MCF 10A (cell line): ENCODE measurements at regions of chr5 and their contacts with region 1.

Region 1: GRCh38 chr5:138575194-138576015 is at the start of gene HSPA9:
- DNase-seq: peak; percentile 100
- H3K4me3 Mint-ChIP-seq: peak within 1 kb of the TSS; percentile 95
- H3K27ac Mint-ChIP-seq: peak within 1 kb of the TSS; percentile 100
- H3K4me1 Mint-ChIP-seq: peaks cover 23% of the 10 kb centered on the region
- H3K27me3 Mint-ChIP-seq: no peaks in the 10 kb centered on the region
- CTCF ChIP-seq: no peak
- total RNA-seq, gene HSPA9: 1,057 and 1,102 TPM in 2 replicates

Region 2: DNA sequence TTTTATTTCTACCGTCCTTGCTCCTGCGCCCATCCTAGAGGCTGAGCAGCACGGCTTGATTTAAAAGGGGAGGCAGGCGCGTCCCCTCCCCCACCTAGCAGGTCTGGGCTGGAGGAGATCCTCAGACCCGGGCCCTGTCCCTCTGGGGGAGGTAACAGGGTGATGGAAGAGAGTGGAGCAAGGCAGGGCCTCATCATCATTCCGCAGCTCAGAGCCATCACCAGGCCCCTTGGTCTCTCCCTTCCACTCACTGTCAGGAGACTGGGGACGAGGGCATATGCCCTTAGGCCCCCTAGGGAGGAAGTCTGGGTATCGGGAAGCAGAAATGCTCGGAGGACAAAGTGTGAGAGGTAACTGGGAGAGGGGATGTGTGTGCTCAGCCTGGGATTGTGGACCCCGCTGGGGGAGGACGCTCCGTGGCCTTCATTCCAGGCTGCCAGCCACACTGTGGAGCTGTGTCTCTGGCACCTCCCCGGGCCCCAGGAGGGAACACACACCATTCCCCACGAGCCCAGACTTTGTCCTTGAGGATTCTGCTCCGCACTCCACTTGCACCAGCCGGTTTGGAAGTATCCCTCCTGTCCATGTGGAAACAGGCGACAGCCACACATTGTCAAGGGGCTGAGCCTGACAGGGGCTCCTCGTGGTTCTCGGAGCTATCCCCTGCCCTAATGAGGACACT is 135.8 kb before region 1 on chr5:
- CTCF ChIA-PET with region 1: no interaction called
- POLR2A ChIA-PET with region 1: no interaction called
- intact Hi-C with region 1: no loop called
- DNase-seq: no peak
- H3K4me3 Mint-ChIP-seq: peak overlapping the region; percentile 69
- H3K27ac Mint-ChIP-seq: peak overlapping the region; percentile 85
- H3K4me1 Mint-ChIP-seq: peaks cover 19% of the 10 kb centered on the region
- H3K27me3 Mint-ChIP-seq: no peaks in the 10 kb centered on the region
- CTCF ChIP-seq: no peak

Region 3: GRCh38 chr5:138542956-138543729 is 32.3 kb before region 1 on chr5 and contains the start of gene ETF1:
- CTCF ChIA-PET with region 1: interaction called, 8 read pairs
- POLR2A ChIA-PET with region 1: interaction called, 97 read pairs
- intact Hi-C with region 1: loop called (anchors 2 kb)
- DNase-seq: peak; percentile 100
- H3K4me3 Mint-ChIP-seq: peak within 1 kb of the TSS; percentile 79
- H3K27ac Mint-ChIP-seq: peak within 1 kb of the TSS; percentile 97
- H3K4me1 Mint-ChIP-seq: peaks cover 32% of the 10 kb centered on the region
- H3K27me3 Mint-ChIP-seq: no peaks in the 10 kb centered on the region
- CTCF ChIP-seq: no peak
- total RNA-seq, gene ETF1: 307 and 349 TPM in 2 replicates

Region 4: GRCh38 chr5:138594305-138595058 is 19.1 kb after region 1 on chr5:
- CTCF ChIA-PET with region 1: interaction called, 10 read pairs
- POLR2A ChIA-PET with region 1: interaction called, 4 read pairs
- intact Hi-C with region 1: no loop called
- DNase-seq: no peak
- H3K4me3 Mint-ChIP-seq: no peak overlapping the region
- H3K27ac Mint-ChIP-seq: no peak overlapping the region
- H3K4me1 Mint-ChIP-seq: peaks cover 6% of the 10 kb centered on the region
- H3K27me3 Mint-ChIP-seq: no peaks in the 10 kb centered on the region
- CTCF ChIP-seq: peak; percentile 50

Region 5: DNA sequence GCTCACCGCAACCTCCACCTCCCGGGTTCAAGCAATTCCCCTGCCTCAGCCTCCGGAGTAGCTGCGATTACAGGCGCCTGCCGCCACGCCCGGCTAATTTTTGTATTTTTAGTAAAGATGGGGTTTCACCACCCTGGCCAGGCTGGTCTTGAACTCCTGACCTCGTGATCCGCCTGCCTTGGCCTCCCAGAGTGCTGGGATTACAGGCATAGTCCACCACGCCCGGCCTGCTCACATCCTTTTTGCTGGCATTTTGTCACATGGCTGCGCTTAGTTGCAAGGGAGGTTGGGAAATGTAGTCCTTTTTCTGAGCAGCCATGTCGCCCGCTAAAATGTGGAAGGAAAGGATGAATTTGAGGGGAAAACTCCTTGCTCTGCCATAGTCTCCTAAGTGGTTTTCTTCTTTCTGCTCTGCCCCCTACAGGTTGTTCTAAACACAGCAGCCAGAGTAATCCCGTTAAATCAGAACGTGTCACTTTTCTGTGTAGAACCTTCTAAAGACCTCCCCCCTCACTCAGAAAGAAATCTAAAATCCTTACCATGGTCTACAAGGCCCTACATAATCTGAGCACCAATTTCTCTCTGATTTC is 57.6 kb after region 1 on chr5:
- CTCF ChIA-PET with region 1: interaction called, 6 read pairs
- POLR2A ChIA-PET with region 1: interaction called, 4 read pairs
- intact Hi-C with region 1: loop called (anchors 2 kb)
- DNase-seq: peak; percentile 95
- H3K4me3 Mint-ChIP-seq: no peak overlapping the region
- H3K27ac Mint-ChIP-seq: no peak overlapping the region
- H3K4me1 Mint-ChIP-seq: peaks cover 6% of the 10 kb centered on the region
- H3K27me3 Mint-ChIP-seq: no peaks in the 10 kb centered on the region
- CTCF ChIP-seq: peak; percentile 52

Region 6: DNA sequence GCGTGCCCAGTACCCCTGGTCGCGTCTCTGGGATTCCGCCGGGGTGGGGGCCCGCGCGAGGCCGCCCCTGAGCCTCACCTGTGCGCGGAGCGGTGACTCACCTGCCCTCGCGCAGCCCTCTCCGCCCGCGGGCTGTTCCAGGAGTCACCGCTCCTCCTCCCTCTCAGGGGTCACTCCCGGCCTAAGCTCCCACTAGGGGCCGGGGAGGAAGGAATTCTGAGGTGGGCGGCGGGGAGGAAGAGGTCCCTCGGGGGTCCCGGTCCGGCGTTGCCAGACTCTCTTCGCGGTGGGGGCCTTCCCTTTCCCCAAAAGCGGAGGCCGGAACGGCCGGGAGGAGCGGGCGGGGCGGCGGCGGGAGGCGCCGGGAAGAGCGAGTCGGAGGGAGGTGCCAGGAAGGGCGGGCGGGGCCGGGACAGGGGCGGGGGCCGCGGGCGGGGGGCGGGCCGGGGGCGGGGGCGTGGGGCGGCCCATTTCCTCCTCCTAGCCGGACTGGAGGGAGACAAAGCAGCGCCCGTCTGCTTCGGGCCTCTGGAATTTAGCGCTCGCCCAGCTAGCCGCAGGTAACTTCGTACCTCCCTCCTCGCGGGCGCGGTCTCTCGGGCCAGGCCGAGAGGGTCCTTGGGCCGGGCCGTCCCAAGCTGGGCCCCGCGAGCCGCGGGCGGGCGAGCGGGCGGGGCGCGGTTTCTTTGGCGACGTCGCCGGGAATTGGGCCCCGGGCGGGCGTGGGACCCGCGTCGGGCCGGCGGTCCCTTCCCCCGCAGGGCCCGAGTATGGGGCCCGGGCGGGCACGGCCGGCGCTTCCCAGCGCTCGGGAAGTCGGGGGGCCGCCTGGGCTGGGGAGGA is 177.8 kb after region 1 on chr5 and contains the start of gene CTNNA1:
- CTCF ChIA-PET with region 1: interaction called, 14 read pairs
- POLR2A ChIA-PET with region 1: interaction called, 58 read pairs
- intact Hi-C with region 1: loop called (anchors 1 kb)
- DNase-seq: peak; percentile 89
- H3K4me3 Mint-ChIP-seq: peak within 1 kb of the TSS; percentile 87
- H3K27ac Mint-ChIP-seq: peak within 1 kb of the TSS; percentile 94
- H3K4me1 Mint-ChIP-seq: peaks cover 49% of the 10 kb centered on the region
- H3K27me3 Mint-ChIP-seq: no peaks in the 10 kb centered on the region
- CTCF ChIP-seq: no peak
- total RNA-seq, gene CTNNA1: 519 and 638 TPM in 2 replicates

Region 7: GRCh38 chr5:139262742-139263445 is 687.5 kb after region 1 on chr5:
- CTCF ChIA-PET with region 1: interaction called, 27 read pairs
- POLR2A ChIA-PET with region 1: interaction called, 4 read pairs
- intact Hi-C with region 1: loop called (anchors 1 kb)
- DNase-seq: peak; percentile 94
- H3K4me3 Mint-ChIP-seq: no peak overlapping the region
- H3K27ac Mint-ChIP-seq: no peak overlapping the region
- H3K4me1 Mint-ChIP-seq: peaks cover 11% of the 10 kb centered on the region
- H3K27me3 Mint-ChIP-seq: no peaks in the 10 kb centered on the region
- CTCF ChIP-seq: peak; percentile 99

Region 8: GRCh38 chr5:139341650-139342422 is 766.4 kb after region 1 on chr5 and contains the start of gene PAIP2:
- CTCF ChIA-PET with region 1: no interaction called
- POLR2A ChIA-PET with region 1: interaction called, 11 read pairs
- intact Hi-C with region 1: no loop called
- DNase-seq: peak; percentile 99
- H3K4me3 Mint-ChIP-seq: peak within 1 kb of the TSS; percentile 97
- H3K27ac Mint-ChIP-seq: peak within 1 kb of the TSS; percentile 100
- H3K4me1 Mint-ChIP-seq: peaks cover 20% of the 10 kb centered on the region
- H3K27me3 Mint-ChIP-seq: no peaks in the 10 kb centered on the region
- CTCF ChIP-seq: peak; percentile 85
- total RNA-seq, gene PAIP2: 104 and 108 TPM in 2 replicates